ENCODE measurements at regions of chr7 and their contacts with region 1.

Region 1: GRCh38 chr7:20598459-20599309 is 16.8 kb upstream of the ABCB5 start:
- DNase-seq: no peak
- ATAC-seq: peak; percentile 72
- H3K4me3 ChIP-seq: no peak overlapping the region
- H3K27ac ChIP-seq: no peak overlapping the region
- H3K4me1 ChIP-seq: no peaks in the 10 kb centered on the region
- H3K27me3 ChIP-seq: no peaks in the 10 kb centered on the region

Region 2: DNA sequence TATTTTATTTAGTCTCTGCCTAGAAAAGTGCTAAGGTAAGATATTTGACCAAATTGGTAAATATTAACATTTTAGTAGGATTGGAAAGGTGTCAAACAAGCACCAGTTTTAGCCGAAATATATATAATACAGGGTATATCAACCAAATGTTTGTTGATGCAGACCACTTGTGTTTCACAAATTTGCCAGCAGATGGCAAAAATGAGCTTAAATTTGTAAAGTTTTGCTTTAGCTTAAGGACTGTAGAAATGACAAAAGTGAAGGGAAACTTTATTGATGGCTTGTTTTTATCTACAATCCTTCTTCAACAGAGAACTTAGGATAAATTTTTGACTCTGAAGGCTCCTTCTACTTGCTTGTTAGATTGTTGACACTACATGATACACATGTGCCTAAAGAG is 885.0 kb before region 1 on chr7:
- intact Hi-C with region 1: loop called (anchors 2 to 5 kb)
- DNase-seq: no peak
- ATAC-seq: no peak
- H3K4me3 ChIP-seq: no peak overlapping the region
- H3K27ac ChIP-seq: no peak overlapping the region
- H3K4me1 ChIP-seq: no peaks in the 10 kb centered on the region
- H3K27me3 ChIP-seq: no peaks in the 10 kb centered on the region

Region 3: GRCh38 chr7:19747740-19748339 is 850.8 kb before region 1 on chr7:
- intact Hi-C with region 1: loop called (anchors 5 to 10 kb)
- DNase-seq: no peak
- ATAC-seq: no peak
- H3K4me3 ChIP-seq: no peak overlapping the region
- H3K27ac ChIP-seq: no peak overlapping the region
- H3K4me1 ChIP-seq: no peaks in the 10 kb centered on the region
- H3K27me3 ChIP-seq: no peaks in the 10 kb centered on the region

Region 4: DNA sequence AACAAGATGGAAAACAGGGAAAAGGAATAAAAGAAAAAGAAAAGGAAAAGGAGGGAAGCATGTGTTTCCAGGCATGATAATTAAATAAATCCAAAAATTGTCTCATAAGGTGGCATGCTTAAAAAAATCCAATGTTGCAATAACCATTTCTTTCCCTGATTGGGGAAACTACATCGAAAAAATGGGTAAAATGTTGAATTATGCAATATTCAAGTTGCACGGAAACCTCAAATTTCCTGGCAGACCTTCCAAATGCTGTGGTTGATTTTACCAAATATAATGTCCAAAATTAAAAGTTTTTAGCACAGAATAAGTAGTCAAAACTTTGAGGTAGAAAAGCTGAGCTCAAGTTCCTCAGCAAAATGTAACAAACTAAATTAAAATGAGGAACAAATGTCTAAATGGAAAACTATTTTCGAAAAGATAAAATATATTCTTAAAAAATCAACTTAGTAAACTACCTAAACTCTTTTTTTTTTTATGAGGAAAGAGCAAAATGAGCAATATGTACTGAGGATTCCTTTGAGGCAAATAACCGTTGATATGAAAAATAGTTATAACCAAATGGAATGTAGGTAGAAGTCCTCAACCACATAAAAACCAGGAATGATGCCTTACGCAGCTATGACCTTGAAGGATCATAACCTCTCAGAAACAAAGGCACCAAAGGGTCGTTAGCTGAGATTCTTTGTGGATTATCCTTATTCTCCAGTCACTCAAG is 434.1 kb before region 1 on chr7:
- intact Hi-C with region 1: loop called (anchors 5 to 10 kb)
- DNase-seq: no peak
- ATAC-seq: no peak
- H3K4me3 ChIP-seq: no peak overlapping the region
- H3K27ac ChIP-seq: no peak overlapping the region
- H3K4me1 ChIP-seq: no peaks in the 10 kb centered on the region
- H3K27me3 ChIP-seq: no peaks in the 10 kb centered on the region